HepG2 (cell line): ENCODE measurements at regions of chr1 and their contacts with region 1.

Region 1: DNA sequence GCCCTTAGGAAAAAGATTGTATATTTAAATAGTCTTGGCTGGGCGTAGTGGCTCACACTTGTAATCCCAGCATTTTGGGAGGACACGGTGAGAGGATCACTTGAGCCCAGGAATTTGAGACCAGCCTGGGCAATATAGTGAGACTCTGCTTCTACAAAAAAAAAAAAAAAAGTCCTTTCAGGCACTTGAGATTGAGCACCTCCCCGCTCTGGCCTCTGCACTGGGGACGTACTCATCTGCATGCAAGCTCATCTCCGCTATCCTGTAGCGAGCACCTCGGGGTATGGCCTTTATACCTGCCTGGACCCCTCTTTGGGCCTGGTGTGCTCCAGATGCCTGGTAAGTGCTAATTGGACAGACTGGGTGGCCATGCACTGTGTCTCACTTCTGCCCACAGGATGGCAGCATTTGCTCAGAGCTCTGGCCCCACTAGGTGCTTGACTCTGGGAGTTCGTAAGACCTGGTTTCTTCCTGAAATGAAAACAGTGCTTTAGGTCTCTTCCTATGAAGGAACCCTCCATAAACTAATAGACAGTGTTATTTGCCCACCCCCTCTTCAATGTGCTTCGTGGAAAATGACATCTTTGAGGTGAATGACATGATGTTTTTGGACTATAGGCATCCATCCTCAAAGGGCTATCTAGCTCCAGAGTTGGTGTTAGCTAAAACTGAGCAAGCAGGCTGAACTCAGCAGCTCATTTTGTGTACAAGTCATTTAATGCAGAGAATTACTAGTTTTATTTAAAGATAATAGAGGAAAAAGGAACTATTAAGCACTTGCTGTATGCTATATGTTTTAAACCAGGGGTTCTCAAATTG is 61.7 kb upstream of the ADAR start:
- DNase-seq: peak; percentile 65
- ATAC-seq: peak; percentile 100
- H3K4me3 ChIP-seq: no peak overlapping the region
- H3K27ac ChIP-seq: no peak overlapping the region
- H3K4me1 ChIP-seq: no peaks in the 10 kb centered on the region
- H3K27me3 ChIP-seq: no peaks in the 10 kb centered on the region; a peak in 1 of 5 replicates
- CTCF ChIP-seq: peak; percentile 94
- EP300 ChIP-seq: no peak
- POLR2A ChIP-seq: no peak
- RAD21 ChIP-seq: peak; percentile 92

Region 2: DNA sequence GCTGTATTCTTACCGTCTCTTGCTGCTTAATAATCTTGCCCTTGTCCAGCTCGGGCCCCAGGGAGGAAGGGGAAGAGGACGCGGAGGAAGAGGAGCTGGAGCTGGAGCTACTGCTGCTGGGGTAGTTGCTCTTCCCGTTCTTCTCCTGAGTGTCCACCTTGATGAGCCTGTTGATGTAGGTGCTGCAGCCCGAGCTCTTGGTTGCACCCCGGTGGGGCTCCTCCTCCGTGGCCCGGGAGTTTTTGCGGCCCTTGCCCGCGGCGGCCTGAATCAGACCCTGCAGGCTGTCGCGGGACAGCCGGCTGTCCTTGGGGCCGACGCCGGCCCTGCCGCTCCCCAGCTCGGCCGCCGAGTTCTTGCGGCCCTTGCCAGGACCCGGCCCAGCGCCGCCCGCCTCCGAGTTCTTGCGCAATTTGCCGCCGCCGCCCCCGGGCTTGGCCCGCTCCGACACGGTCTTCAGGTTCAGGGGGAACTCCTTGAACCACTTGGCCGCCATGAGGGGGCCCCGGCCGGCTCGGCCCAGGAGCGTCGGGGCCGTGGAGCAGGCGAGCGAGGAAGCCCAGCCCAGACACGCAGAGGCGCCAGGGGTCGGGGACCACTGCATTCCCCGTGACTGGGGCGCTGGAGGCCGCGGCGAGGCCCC is 168.1 kb before region 1 on chr1:
- CTCF ChIA-PET with region 1: no interaction called
- POLR2A ChIA-PET with region 1: no interaction called
- in situ Hi-C with region 1: no loop called
- intact Hi-C with region 1: no loop called
- DNase-seq: no peak
- ATAC-seq: peak; percentile 76
- H3K4me3 ChIP-seq: peak overlapping the region in 1 of 3 experiments; percentile 52; a peak in 1 of 6 replicates
- H3K27ac ChIP-seq: no peak overlapping the region
- H3K4me1 ChIP-seq: peaks cover 8% of the 10 kb centered on the region
- H3K27me3 ChIP-seq: peaks cover 4 to 20% of the 10 kb centered on the region in 2 experiments
- CTCF ChIP-seq: no peak
- EP300 ChIP-seq: no peak
- POLR2A ChIP-seq: no peak
- RAD21 ChIP-seq: no peak

Region 3: GRCh38 chr1:154741741-154742495 is 72.2 kb after region 1 on chr1:
- CTCF ChIA-PET with region 1: interaction called, 51 read pairs
- POLR2A ChIA-PET with region 1: no interaction called
- in situ Hi-C with region 1: no loop called
- intact Hi-C with region 1: loop called (anchors 2 kb)
- DNase-seq: peak; percentile 63
- ATAC-seq: peak; percentile 98
- H3K4me3 ChIP-seq: no peak overlapping the region
- H3K27ac ChIP-seq: no peak overlapping the region
- H3K4me1 ChIP-seq: 0 out of 2 replicates have a peak, but pooled peaks cover 13% of the 10 kb centered on the region
- H3K27me3 ChIP-seq: peaks cover 0 to 33% of the 10 kb centered on the region in 2 experiments; a peak in 2 of 5 replicates
- CTCF ChIP-seq: peak; percentile 91
- EP300 ChIP-seq: no peak
- POLR2A ChIP-seq: no peak
- RAD21 ChIP-seq: peak; percentile 75; the same call in 1 of the 2 replicates

Region 4: DNA sequence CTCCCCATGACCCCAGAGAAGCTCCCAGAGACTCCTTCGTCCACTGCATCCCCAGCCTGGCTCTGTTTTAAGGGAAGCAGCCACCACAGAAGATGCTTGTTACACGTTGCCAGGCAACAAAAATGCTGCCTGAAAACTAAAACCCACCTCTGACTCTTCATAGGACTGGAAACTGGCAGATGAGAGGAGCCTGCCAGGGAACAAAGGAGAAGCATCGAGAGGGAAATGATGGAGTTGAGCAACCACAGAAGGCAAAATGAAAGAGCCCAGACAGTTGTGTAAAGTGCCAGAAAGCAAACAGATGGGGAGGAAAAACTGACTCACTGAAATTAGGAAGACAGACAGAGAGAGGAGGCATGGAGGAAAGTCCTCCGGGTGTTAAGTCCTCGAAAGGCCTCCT is 82.0 kb after region 1 on chr1:
- CTCF ChIA-PET with region 1: no interaction called
- POLR2A ChIA-PET with region 1: no interaction called
- in situ Hi-C with region 1: loop called (anchors 10 kb)
- intact Hi-C with region 1: no loop called
- DNase-seq: no peak
- ATAC-seq: no peak
- H3K4me3 ChIP-seq: no peak overlapping the region
- H3K27ac ChIP-seq: no peak overlapping the region
- H3K4me1 ChIP-seq: no peaks in the 10 kb centered on the region
- H3K27me3 ChIP-seq: peaks cover 1 to 55% of the 10 kb centered on the region in 2 experiments; a peak in 3 of 5 replicates
- CTCF ChIP-seq: no peak
- EP300 ChIP-seq: no peak
- POLR2A ChIP-seq: no peak
- RAD21 ChIP-seq: no peak

Region 5: DNA sequence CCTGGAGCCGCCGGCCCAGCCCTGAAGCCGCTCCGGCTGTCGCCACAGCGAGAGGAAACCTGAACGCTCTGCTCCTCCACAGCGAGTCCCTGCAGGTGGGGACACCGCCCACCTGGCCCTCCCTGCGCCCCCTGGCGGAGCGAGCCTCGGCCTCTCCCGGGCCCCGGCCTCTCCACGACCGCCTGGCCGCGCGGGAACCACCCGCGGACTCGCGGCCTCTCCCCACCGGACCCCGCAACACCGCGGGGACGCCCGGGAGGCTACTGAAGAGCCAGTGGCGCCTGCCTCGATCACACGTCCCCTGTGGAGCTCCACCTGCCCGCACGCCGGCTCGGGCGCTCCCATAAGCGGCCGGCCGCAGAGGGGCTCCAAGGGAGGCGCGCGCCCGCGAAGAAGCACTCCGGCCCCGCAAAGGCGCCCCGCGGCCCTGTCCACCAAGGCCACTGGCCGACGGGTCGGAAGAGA is 90.8 kb after region 1 on chr1:
- CTCF ChIA-PET with region 1: interaction called, 22 read pairs
- POLR2A ChIA-PET with region 1: no interaction called
- in situ Hi-C with region 1: loop called (anchors 10 kb)
- intact Hi-C with region 1: loop called (anchors 1 kb)
- DNase-seq: peak; percentile 17
- ATAC-seq: peak; percentile 99
- H3K4me3 ChIP-seq: peak overlapping the region; percentile 38 to 52 (median 40); a peak in 2 of 6 replicates
- H3K27ac ChIP-seq: no peak overlapping the region
- H3K4me1 ChIP-seq: no peaks in the 10 kb centered on the region
- H3K27me3 ChIP-seq: no peaks in the 10 kb centered on the region; a peak in 2 of 5 replicates
- CTCF ChIP-seq: peak; percentile 87
- EP300 ChIP-seq: no peak
- POLR2A ChIP-seq: no peak
- RAD21 ChIP-seq: peak; percentile 84

Region 6: DNA sequence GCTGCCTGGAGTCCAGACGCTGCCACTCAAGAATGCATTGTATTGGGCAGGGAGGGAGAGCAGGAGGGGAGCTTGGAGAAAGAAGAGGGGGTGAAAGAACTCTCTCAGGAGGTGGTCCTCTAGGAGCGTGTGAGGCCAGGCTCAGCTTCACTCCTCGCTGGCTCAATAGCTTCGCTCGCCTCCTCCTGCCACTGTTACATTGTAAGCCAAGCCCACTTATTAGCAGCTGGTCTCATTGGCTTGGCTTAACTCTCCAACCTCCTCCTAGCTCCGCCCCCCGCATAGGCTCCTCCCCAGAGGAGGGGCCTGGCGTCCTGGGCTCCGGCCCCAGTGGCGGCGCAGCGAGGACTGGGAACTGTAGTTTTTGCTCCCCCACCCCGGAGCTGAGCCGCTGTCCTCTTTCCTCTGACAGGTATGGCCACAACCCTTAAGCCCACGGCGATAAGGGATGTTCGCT is 200.5 kb after region 1 on chr1 and contains the start of gene KCNN3:
- CTCF ChIA-PET with region 1: no interaction called
- POLR2A ChIA-PET with region 1: no interaction called
- in situ Hi-C with region 1: loop called (anchors 10 kb)
- intact Hi-C with region 1: no loop called
- DNase-seq: peak; percentile 68
- ATAC-seq: peak; percentile 98
- H3K4me3 ChIP-seq: peak within 1 kb of the TSS in 1 of 3 experiments; percentile 39; a peak in 1 of 6 replicates
- H3K27ac ChIP-seq: no peak within 1 kb of the TSS
- H3K4me1 ChIP-seq: peaks cover 18% of the 10 kb centered on the region
- H3K27me3 ChIP-seq: peaks cover 0 to 47% of the 10 kb centered on the region in 2 experiments; a peak in 4 of 5 replicates
- CTCF ChIP-seq: no peak
- EP300 ChIP-seq: no peak
- POLR2A ChIP-seq: no peak
- RAD21 ChIP-seq: no peak
- total RNA-seq, gene KCNN3: not detected in 2 replicates

Region 7: DNA sequence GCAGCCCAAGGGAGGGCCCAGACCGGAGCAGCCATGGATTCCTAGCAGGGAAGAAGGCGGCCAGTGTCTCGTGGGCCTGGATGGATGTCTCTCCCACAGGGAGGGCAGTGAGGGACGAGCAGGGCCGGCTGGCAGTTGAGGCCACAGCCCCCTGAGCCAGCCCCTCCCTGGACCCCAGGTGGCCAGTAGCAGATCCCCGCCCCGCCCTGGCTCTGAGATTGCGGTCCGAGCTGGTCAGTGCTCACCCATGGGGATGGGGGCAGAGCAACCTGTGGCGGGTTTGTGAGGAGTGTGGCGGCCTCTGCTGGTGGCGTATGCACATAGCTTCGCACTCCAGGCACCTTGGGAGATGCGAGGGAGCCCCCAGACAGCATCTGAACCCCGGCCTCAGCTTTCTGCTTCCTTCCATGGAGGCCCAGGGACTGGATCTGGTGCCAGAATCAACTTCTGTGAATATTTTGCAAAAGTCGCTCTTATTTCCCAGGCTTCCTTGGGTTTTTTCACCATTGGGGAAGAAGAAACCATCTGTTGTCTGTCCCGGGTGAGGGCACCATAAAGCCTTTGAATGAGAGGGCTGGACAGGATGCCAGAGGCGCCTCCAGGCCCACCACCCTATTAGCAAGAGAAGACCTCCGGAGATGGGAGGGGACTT is 208.8 kb after region 1 on chr1:
- CTCF ChIA-PET with region 1: interaction called, 13 read pairs
- POLR2A ChIA-PET with region 1: no interaction called
- in situ Hi-C with region 1: loop called (anchors 10 kb)
- intact Hi-C with region 1: loop called (anchors 1 kb)
- DNase-seq: peak; percentile 48
- ATAC-seq: peak; percentile 88
- H3K4me3 ChIP-seq: peak overlapping the region in 2 of 3 experiments; percentile 36 to 62; a peak in 1 of 6 replicates
- H3K27ac ChIP-seq: no peak overlapping the region
- H3K4me1 ChIP-seq: peaks cover 19% of the 10 kb centered on the region
- H3K27me3 ChIP-seq: peaks cover 2 to 40% of the 10 kb centered on the region in 2 experiments; a peak in 4 of 5 replicates
- CTCF ChIP-seq: peak; percentile 98
- EP300 ChIP-seq: no peak
- POLR2A ChIP-seq: no peak
- RAD21 ChIP-seq: peak; percentile 92